ENCODE measurements at regions of chr19 and their contacts with region 1.

Region 1: GRCh38 chr19:55339048-55339888 is at the start of gene KMT5C:
- DNase-seq: peak; percentile 100
- ATAC-seq: peak; percentile 79
- H3K4me3 ChIP-seq: peak within 1 kb of the TSS; percentile 65 to 91 (median 70)
- H3K4me3 Mint-ChIP-seq: peak within 1 kb of the TSS; percentile 94
- H3K27ac ChIP-seq: peak within 1 kb of the TSS; percentile 98
- H3K27ac Mint-ChIP-seq: peak within 1 kb of the TSS; percentile 93
- H3K4me1 ChIP-seq: peaks cover 16 to 28% of the 10 kb centered on the region in 2 donors
- H3K4me1 Mint-ChIP-seq: peaks cover 20% of the 10 kb centered on the region
- H3K27me3 ChIP-seq: peaks cover 0 to 23% (median 9%) of the 10 kb centered on the region in 4 experiments
- H3K27me3 Mint-ChIP-seq: peaks cover 19% of the 10 kb centered on the region
- CTCF ChIP-seq: no peak
- total RNA-seq, gene KMT5C: 19.6 and 22.2 TPM in 2 replicates

Region 2: DNA sequence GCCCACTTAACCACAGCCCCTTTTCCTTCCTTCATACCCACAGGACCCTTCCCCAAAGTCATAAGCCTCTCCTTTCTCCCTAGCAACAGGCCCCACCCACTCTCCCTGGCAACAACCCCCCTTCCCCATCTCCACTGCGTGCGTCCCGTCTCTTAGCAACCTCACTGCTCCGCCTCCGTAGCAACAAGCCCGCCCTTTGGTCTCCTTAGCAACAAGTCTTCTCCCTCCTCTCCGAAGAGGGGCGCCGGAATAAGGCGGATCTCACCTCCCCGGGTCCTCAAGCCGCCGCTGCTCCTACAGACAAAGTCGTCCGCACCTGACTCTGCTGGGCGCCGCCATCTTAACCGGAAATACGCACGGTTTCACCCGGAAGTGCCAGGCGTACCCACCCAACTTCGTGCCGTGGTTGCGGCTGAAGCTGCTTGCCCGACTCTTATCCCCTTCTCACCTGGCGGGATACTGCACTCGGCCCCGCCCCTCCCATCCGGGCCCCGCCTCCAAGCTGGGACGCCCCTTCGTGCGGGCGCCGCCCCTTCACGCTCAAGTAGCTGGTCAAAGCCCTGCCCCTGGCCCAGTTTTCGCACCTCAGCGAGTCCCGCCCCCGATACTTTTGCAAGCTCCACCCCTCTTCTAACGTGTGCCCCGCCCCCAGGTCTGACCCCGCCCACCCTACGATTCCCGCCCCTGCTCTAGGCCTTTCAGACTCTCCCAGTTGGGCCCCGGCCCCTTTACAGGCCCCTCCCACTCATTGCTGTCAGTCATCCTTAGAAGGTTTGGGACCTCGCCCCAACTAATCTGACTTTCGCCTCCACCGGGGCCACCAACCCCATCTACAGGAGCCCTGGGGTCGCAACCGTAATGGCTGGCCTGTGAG is 59.3 kb before region 1 on chr19 and contains the start of gene HSPBP1:
- CTCF ChIA-PET with region 1: interaction called, 3 read pairs
- POLR2A ChIA-PET with region 1: interaction called, 5 read pairs
- intact Hi-C with region 1: loop called (anchors 1 kb)
- DNase-seq: peak; percentile 99
- ATAC-seq: peak; percentile 85
- H3K4me3 ChIP-seq: peak within 1 kb of the TSS; percentile 63 to 83 (median 71)
- H3K4me3 Mint-ChIP-seq: peak within 1 kb of the TSS; percentile 99
- H3K27ac ChIP-seq: peak within 1 kb of the TSS; percentile 87 to 96
- H3K27ac Mint-ChIP-seq: peak within 1 kb of the TSS; percentile 99
- H3K4me1 ChIP-seq: peaks cover 56 to 71% of the 10 kb centered on the region in 2 donors
- H3K4me1 Mint-ChIP-seq: peaks cover 68% of the 10 kb centered on the region
- H3K27me3 ChIP-seq: peaks cover 0 to 9% (median 3%) of the 10 kb centered on the region in 4 experiments
- H3K27me3 Mint-ChIP-seq: peaks cover 7% of the 10 kb centered on the region
- CTCF ChIP-seq: no peak
- total RNA-seq, gene HSPBP1: 15.6 and 18.2 TPM in 2 replicates

Region 3: DNA sequence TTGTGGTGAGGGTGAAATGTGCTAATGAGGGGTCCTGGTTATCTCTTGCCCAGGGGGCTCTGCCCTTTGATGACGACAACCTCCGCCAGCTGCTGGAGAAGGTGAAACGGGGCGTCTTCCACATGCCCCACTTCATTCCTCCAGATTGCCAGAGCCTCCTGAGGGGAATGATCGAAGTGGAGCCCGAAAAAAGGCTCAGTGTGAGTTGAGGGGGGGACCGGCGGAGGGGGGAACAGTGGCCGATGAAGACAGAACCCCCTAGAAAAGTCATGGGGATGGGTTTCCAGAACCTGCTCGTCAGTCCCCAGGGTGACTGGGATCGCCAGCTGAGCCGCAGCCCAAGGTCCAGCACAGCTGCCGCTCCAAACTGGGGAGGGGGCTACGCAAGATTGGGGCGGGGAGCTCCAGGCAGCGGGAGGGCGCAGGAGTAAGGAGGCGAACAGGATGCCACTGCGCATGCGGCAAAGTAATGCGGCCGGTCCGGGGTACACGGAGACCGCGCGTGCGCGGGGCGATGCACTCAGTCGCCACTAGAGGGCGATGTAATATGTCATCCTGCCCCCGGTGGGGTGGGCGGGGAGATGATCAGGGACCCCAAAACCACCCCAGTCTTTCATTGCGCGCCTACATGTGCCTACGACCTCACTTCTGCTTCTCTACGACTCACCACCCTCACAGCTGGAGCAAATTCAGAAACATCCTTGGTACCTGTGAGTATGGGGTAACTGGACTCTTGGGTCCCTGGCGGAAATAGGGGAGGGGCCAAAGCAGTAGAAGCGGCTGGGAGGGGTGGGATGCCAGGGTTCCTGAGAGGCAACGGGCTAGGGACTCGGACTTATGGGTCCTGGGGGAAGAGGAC is 37.6 kb before region 1 on chr19:
- CTCF ChIA-PET with region 1: interaction called, 10 read pairs
- POLR2A ChIA-PET with region 1: interaction called, 3 read pairs
- intact Hi-C with region 1: loop called (anchors 1 kb)
- DNase-seq: peak; percentile 95
- ATAC-seq: peak; percentile 91
- H3K4me3 ChIP-seq: peak overlapping the region in 4 of 5 experiments; percentile 35 to 53 (median 49)
- H3K4me3 Mint-ChIP-seq: peak overlapping the region; percentile 90
- H3K27ac ChIP-seq: peak overlapping the region; percentile 25 to 64
- H3K27ac Mint-ChIP-seq: peak overlapping the region; percentile 87
- H3K4me1 ChIP-seq: peaks cover 8 to 15% of the 10 kb centered on the region in 2 donors
- H3K4me1 Mint-ChIP-seq: peaks cover 12% of the 10 kb centered on the region
- H3K27me3 ChIP-seq: no peaks in the 10 kb centered on the region
- H3K27me3 Mint-ChIP-seq: peaks cover 6% of the 10 kb centered on the region
- CTCF ChIP-seq: peak; percentile 92

Region 4: GRCh38 chr19:55319785-55320184 is 19.5 kb before region 1 on chr19:
- CTCF ChIA-PET with region 1: no interaction called
- POLR2A ChIA-PET with region 1: no interaction called
- intact Hi-C with region 1: no loop called
- DNase-seq: no peak
- ATAC-seq: no peak
- H3K4me3 ChIP-seq: no peak overlapping the region
- H3K4me3 Mint-ChIP-seq: no peak overlapping the region
- H3K27ac ChIP-seq: no peak overlapping the region
- H3K27ac Mint-ChIP-seq: no peak overlapping the region
- H3K4me1 ChIP-seq: peaks cover 0 to under 1% of the 10 kb centered on the region in 2 donors
- H3K4me1 Mint-ChIP-seq: no peaks in the 10 kb centered on the region
- H3K27me3 ChIP-seq: peaks cover 0 to 8% (median under 1%) of the 10 kb centered on the region in 4 experiments
- H3K27me3 Mint-ChIP-seq: peaks cover 16% of the 10 kb centered on the region
- CTCF ChIP-seq: no peak

Region 5: GRCh38 chr19:55385740-55386529 is 46.7 kb after region 1 on chr19 and contains the start of gene RPL28:
- CTCF ChIA-PET with region 1: interaction called, 9 read pairs
- POLR2A ChIA-PET with region 1: interaction called, 12 read pairs
- intact Hi-C with region 1: loop called (anchors 1 kb)
- DNase-seq: peak; percentile 99
- ATAC-seq: peak; percentile 81
- H3K4me3 ChIP-seq: peak within 1 kb of the TSS; percentile 85 to 99 (median 97)
- H3K4me3 Mint-ChIP-seq: peak within 1 kb of the TSS; percentile 100
- H3K27ac ChIP-seq: peak within 1 kb of the TSS; percentile 96
- H3K27ac Mint-ChIP-seq: peak within 1 kb of the TSS; percentile 100
- H3K4me1 ChIP-seq: peaks cover 40 to 57% of the 10 kb centered on the region in 2 donors
- H3K4me1 Mint-ChIP-seq: peaks cover 68% of the 10 kb centered on the region
- H3K27me3 ChIP-seq: no peaks in the 10 kb centered on the region
- H3K27me3 Mint-ChIP-seq: no peaks in the 10 kb centered on the region
- CTCF ChIP-seq: no peak
- total RNA-seq, gene RPL28: 2,397 and 2,578 TPM in 2 replicates

Region 6: GRCh38 chr19:55461259-55461973 is 122.1 kb after region 1 on chr19 and contains the start of gene ISOC2:
- CTCF ChIA-PET with region 1: no interaction called
- POLR2A ChIA-PET with region 1: no interaction called
- intact Hi-C with region 1: loop called (anchors 1 kb)
- DNase-seq: peak; percentile 100
- ATAC-seq: peak; percentile 97
- H3K4me3 ChIP-seq: peak within 1 kb of the TSS; percentile 56 to 98 (median 90)
- H3K4me3 Mint-ChIP-seq: peak within 1 kb of the TSS; percentile 87
- H3K27ac ChIP-seq: peak within 1 kb of the TSS; percentile 73 to 78
- H3K27ac Mint-ChIP-seq: peak within 1 kb of the TSS; percentile 81
- H3K4me1 ChIP-seq: peaks cover 10 to 14% of the 10 kb centered on the region in 2 donors
- H3K4me1 Mint-ChIP-seq: peaks cover 20% of the 10 kb centered on the region
- H3K27me3 ChIP-seq: no peaks in the 10 kb centered on the region
- H3K27me3 Mint-ChIP-seq: no peaks in the 10 kb centered on the region
- CTCF ChIP-seq: no peak
- total RNA-seq, gene ISOC2: 10.0 and 11.1 TPM in 2 replicates